Right ventricle myocardium superior (tissue), 1 donor: ENCODE measurements at regions of chr2 and their contacts with region 1.

Region 1: DNA sequence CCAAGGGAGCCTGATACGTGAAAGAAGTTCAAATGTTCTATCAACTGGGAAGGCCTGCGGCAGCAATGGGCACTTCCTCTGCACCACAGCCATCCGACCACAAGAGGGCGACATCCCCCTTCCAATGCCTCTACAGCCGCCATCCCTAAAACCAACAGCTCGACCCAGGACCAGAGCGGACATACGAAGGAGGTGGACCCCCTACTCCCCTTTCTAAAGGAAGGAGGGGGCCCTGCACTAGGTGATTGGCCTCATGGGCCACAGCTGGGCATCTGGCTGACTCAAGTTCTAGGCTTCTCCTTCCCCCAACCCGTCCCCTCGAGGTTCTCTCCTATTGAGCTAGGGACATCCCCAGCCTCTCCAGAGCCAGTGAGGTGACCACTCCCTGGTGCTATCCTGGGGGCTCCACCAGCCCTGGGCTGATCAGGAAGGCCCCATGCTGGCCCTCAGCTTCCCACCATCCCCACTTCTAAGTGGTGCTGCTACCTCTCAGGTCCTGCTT is 217.2 kb downstream of the TNS1 start:
- DNase-seq: peak; percentile 89
- ATAC-seq: peak; percentile 85

Region 2: DNA sequence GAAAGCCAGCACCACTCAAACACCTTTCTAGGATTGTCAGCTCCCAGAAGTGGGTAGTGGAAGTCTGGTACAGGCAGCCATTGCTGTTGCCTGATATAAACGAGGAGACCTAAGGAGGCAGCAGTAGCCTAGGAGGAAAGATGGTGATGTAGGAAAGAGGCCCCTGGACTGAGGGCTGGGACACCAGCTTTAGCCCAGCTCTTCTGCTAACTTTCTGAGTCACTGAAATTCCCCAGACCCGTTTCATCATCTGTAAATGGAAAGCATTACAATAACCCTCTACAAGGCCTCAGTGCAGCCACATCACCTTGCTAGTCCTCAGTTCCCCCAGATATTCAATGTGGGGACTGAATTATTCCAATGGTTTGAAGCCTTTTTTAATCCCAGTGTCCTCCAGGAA is 119.3 kb before region 1 on chr2:
- intact Hi-C with region 1: no loop called
- DNase-seq: no peak
- ATAC-seq: no peak

Region 3: GRCh38 chr2:217685255-217685605 is 100.4 kb before region 1 on chr2:
- intact Hi-C with region 1: no loop called
- DNase-seq: peak; percentile 55
- ATAC-seq: peak; percentile 92

Region 4: GRCh38 chr2:217886720-217887309 is 101.2 kb after region 1 on chr2:
- intact Hi-C with region 1: loop called (anchors 5 kb)
- DNase-seq: peak; percentile 66
- ATAC-seq: peak; percentile 55

Region 5: DNA sequence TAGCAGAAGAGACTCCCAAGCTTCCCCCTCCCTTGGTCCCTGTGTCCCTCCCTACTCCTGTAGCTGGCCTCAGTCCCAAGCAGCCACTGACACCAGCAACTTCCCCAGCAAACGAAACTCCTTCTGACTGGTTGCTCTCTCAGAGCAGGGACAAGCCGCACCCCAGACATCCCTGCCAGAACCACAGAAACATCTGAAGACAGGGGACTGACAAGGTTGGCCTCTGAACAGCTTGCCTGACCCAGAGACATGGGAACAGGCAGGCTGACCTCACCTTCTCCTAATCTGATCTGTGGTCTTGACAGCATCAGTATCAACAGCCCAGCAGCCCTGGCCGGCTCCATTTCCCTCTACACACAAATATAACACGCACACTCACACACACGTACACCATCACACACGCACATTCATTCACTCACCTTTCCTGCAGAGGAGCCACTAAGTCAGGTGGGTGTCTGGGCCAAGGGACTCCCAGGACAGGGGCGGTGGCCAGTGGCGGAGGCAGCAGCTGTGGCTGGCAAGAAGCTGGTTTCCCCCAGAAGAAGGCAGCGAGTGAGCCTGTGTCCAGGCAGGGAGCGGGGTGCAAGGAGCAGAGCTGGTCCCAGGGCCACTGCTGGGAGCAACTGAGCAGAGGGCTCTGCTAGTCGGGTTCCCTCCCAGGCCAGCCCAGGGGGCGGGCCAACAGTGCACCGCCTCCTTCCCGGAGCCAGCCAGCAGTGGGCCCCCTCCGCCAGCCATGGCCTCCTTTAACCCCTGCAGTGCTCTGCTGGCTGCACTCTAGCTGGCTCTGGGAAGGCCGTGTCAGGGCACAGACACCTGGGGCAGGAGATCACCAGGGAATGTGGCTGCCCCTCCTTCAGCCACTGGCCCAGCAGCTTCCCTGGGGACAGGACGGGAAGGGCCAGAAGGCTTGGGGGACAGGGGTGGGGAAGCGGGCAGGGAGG is 158.1 kb after region 1 on chr2:
- intact Hi-C with region 1: no loop called
- DNase-seq: peak; percentile 92
- ATAC-seq: peak; percentile 88

Region 6: DNA sequence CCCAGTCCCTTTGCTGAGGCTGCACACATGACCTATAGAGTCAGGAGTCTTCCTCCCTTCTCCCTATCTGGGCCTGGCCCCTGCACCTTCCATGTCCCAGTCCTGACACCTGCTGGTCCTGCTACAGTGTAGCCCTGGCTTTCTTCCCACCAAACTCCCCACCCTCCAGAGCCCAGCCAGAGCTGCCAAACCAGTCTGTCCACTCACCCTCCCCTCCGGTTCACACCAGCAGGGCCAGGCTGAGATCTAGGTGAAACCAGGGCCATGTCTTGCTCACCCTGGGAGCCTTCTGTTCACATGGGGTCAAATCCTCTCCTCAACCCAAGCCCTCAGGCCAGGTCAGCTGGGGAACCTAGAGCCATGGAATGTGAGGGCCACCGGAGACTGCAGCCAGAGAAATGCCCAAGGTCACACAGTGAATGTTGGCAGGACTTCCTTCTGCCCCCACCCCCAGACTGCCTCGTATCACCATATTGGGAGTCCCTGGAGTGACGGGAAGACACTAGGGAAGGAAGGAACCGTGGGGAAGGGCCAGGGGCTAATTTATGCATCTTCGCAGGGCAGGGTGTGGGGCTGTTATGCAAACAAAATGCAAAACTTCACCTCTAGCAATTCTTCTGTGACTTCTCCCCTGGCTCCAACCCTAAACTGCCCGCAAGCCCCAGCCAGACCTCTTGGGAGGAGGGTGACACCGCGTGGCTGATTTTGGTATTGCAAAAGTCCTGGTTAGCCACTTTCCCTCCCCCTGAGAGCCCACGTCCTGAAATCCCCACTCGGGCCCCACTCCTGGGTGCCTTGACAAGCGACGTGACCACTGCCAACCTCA is 202.6 kb after region 1 on chr2:
- intact Hi-C with region 1: loop called (anchors 2 kb)
- DNase-seq: peak; percentile 90
- ATAC-seq: peak; percentile 87

Region 7: DNA sequence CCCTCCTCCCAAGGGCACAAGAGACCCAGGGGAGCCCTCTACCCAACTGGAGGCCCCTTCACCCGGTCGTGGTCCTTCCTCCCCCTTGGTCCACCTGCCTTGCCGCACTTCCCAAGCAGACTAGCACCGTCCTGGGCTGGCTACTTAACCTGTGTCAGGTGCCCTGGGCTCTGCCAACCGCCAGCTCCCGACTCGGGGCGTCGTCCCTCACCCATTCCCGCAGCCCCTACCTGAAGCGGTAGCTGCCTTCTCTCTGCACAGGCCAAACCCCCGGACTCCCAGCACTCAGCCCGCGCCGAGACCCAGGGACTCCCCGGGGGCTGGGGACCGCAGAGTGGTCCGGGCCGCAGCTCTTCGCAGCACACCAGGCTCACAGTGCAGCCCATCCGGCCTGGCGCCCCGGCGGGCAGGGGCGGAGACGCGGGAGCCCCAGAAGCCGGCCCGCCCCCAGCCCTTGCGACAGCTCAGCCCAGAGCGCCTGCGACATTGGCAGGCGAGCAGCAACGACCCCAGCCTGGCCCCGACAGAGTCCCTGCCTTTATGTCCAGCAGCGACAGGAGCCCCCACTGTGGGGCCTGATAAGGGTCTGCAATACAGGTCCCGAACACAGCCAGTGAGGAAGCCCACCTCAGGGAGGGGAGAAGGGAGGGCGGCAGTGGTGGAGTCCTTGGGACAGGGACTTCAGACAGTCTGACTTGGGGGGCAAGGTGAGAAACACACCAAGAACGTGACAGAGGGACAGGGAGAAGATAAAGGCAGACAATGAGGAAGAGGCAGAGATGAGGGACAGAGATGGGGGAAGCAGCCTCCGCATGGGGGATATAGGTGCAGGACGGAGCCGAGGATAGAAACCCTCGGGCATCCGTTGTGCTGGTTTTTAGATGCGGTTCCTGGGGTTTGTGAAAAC is 248.2 kb after region 1 on chr2:
- intact Hi-C with region 1: loop called (anchors 5 kb)
- DNase-seq: no peak
- ATAC-seq: no peak

Region 8: GRCh38 chr2:218074031-218074430 is 288.4 kb after region 1 on chr2:
- intact Hi-C with region 1: loop called (anchors 5 kb)
- DNase-seq: peak; percentile 52
- ATAC-seq: peak; percentile 46